ENCODE measurements at regions of chr12 and their contacts with region 1.

Region 1: GRCh38 chr12:53213348-53213747 is 6.3 kb upstream of the ITGB7 start:
- DNase-seq: peak; percentile 82 to 93 (median 88)
- H3K4me3 ChIP-seq: no peak overlapping the region
- H3K27ac ChIP-seq: peak overlapping the region in 1 of 5 donors; percentile 97
- H3K4me1 ChIP-seq: peaks cover 15 to 37% of the 10 kb centered on the region in 2 donors
- H3K27me3 ChIP-seq: no peaks in the 10 kb centered on the region
- CTCF ChIP-seq: peak; percentile 94 to 98 (median 96)
- POLR2A ChIP-seq: no peak

Region 2: DNA sequence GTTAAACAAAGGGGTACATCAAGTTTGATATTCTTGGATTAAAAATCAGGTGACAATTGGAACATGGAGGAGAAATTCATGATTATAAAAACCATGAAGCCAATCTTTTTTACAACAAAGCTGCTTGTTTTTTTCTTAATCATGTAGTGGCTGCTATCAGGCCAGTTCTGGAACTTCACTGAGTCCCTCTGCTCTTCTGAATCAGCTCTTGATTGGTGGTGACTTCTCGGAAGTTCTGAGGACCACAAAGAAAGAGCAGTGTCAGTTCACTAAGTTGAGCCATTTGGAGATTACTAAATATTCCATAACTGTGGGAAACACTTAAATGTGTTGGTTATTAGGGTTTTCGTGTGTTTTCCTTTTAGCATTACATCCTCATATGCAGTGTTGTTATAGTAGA is 198.6 kb before region 1 on chr12:
- intact Hi-C with region 1: no loop called
- DNase-seq: no peak
- H3K4me3 ChIP-seq: no peak overlapping the region
- H3K27ac ChIP-seq: no peak overlapping the region
- H3K4me1 ChIP-seq: peaks cover 2 to 24% of the 10 kb centered on the region in 2 donors
- H3K27me3 ChIP-seq: no peaks in the 10 kb centered on the region
- CTCF ChIP-seq: no peak
- POLR2A ChIP-seq: no peak

Region 3: DNA sequence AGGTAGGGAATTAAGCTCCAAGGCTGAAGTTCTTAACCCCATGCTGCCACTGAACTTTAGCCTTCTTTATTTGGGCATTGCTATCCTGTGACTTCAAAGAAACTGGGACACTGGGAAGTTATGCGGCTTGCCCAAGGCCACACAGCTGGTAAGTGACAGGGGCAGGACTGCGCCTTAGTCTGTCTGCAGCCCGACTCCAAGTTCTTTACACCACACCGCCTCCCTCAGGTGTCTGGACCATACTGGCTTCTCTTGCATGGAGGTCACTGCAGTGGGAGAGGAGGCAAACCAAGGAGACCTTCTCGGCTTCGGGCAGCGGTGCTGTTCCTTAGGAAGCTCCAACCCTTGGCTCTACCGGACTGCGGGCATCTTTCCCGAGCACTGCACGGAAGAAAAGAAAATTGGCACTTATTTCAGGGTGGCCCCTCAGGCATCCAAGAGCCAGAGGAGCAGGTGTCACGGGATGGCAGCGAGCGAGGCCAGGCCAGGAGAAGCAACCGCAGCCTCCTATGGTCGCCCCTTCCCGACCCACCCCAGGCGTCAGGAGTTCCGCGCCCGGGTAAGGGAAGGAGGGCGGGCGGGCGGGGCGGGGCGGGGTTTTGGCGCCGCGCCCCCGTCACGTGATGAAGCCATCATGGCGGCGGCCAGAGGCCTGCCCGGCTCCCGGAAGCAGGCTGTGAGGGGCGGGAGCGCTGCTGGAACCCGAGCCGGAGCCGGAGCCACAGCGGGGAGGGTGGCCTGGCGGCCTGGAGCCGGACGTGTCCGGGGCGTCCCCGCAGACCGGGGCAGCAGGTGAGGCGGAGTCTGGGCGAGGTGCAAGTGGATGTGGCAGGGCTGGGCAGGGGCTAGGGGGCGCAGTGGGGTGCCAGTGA is 38.4 kb after region 1 on chr12:
- intact Hi-C with region 1: loop called (anchors 2 to 5 kb)
- DNase-seq: peak; percentile 80 to 95 (median 92)
- H3K4me3 ChIP-seq: peak overlapping the region in 3 of 4 donors; percentile 42 to 92 (median 79)
- H3K27ac ChIP-seq: peak overlapping the region; percentile 76 to 95 (median 91)
- H3K4me1 ChIP-seq: peaks cover 20 to 26% of the 10 kb centered on the region in 2 donors
- H3K27me3 ChIP-seq: no peaks in the 10 kb centered on the region
- CTCF ChIP-seq: peak in 4 of 6 experiments; percentile 22 to 40 (median 36)
- POLR2A ChIP-seq: peak; percentile 10 to 54

Region 4: DNA sequence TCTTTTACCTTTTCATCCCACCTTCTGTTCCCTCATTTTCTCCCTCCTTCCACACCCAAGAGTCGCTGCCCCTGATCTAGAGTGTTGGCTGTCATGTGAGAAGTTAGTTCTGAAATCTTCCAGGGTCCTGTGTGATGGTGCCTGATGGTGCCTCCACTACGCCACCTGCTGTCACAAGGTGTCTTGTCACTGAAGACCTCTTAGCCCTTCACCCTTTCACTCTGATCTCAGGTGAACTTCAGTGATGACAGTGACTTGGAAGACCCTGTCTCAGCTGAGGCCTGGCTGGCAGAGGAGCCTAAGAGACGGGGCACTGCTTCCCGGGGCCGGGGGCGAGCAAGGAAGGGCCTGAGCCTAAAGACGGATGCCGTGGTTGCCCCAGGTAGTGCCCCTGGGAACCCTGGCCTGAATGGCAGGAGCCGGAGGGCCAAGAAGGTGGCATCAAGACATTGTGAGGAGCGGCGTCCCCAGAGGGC is 74.4 kb after region 1 on chr12:
- intact Hi-C with region 1: loop called (anchors 5 to 10 kb)
- DNase-seq: peak; percentile 64 to 88 (median 72)
- H3K4me3 ChIP-seq: no peak overlapping the region
- H3K27ac ChIP-seq: no peak overlapping the region
- H3K4me1 ChIP-seq: no peaks in the 10 kb centered on the region
- H3K27me3 ChIP-seq: no peaks in the 10 kb centered on the region
- CTCF ChIP-seq: peak; percentile 51 to 83 (median 74)
- POLR2A ChIP-seq: no peak

Region 5: GRCh38 chr12:53427905-53428594 is 214.7 kb after region 1 on chr12:
- intact Hi-C with region 1: loop called in 1 of 2 experiments (anchors 10 kb)
- DNase-seq: peak; percentile 56 to 87 (median 81)
- H3K4me3 ChIP-seq: no peak overlapping the region
- H3K27ac ChIP-seq: peak overlapping the region in 3 of 5 donors; percentile 6 to 86 (median 80)
- H3K4me1 ChIP-seq: peaks cover 15 to 40% of the 10 kb centered on the region in 2 donors
- H3K27me3 ChIP-seq: no peaks in the 10 kb centered on the region
- CTCF ChIP-seq: no peak
- POLR2A ChIP-seq: peak in 1 of 2 donors; percentile 44

Measured in adrenal gland (tissue), 19 donors.